Naive thymus-derived CD4-positive, alpha-beta T cell (primary cell): ENCODE measurements at regions of chr17 and their contacts with region 1.

Region 1: GRCh38 chr17:49343273-49343672 is 18.8 kb downstream of the ZNF652 start:
- DNase-seq: peak in 4 of 9 donors; percentile 12 to 35 (median 26)
- ATAC-seq: no peak
- H3K4me3 ChIP-seq: peak overlapping the region; percentile 10
- H3K4me3 Mint-ChIP-seq: peak overlapping the region; percentile 35 to 85 (median 79)
- H3K27ac ChIP-seq: no peak overlapping the region
- H3K27ac Mint-ChIP-seq: peak overlapping the region; percentile 6 to 90 (median 72)
- H3K4me1 ChIP-seq: peaks cover 13 to 51% of the 10 kb centered on the region in 2 donors
- H3K4me1 Mint-ChIP-seq: peaks cover 39 to 82% (median 68%) of the 10 kb centered on the region in 7 donors
- H3K27me3 ChIP-seq: no peaks in the 10 kb centered on the region
- H3K27me3 Mint-ChIP-seq: peaks cover 0 to 9% (median 0%) of the 10 kb centered on the region in 5 donors

Region 2: DNA sequence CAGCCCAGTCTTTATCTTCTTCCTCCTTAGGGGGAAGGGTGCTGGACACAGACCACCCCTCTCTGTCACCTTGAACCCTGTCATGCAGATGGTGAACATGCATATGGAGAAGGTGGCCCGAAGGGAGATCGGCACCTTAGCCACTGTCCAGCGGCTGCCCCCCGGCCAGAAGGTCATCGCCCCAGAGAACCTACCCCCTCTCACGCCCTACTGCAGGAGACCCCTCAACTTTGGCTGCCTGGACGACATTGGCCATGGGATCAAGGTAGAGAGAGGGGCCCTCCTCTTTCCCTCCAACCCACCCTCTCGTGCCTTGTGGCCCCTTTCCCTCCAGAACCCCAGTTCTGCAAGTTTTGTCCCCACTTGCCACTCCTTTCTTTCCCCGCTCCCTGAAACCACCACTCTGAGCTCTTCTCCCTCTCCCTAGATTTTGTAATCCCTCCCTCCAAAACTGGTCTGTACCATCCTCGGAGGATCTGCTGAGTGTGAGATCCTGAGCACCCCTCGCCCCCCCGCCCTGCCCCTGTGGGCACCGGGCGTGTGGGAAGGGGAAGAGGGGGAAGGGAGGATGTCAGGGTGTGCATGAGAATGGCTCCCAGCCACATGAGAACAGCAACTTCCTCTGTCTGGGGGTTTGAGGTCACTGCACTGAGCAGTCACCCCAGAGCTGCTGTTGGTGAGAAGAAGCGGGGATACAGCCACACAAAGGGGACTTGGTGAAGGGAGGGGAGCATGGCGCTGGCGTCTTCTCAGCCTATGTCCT is 125.4 kb before region 1 on chr17:
- CTCF ChIA-PET with region 1: no interaction called
- POLR2A ChIA-PET with region 1: no interaction called
- intact Hi-C with region 1: loop called in 1 of 2 experiments (anchors 1 kb)
- DNase-seq: peak; percentile 41 to 84 (median 79)
- ATAC-seq: peak; percentile 87
- H3K4me3 ChIP-seq: no peak overlapping the region
- H3K4me3 Mint-ChIP-seq: peak overlapping the region; percentile 78 to 94 (median 84)
- H3K27ac ChIP-seq: peak overlapping the region; percentile 70
- H3K27ac Mint-ChIP-seq: peak overlapping the region; percentile 81 to 99 (median 92)
- H3K4me1 ChIP-seq: peaks cover 64 to 72% of the 10 kb centered on the region in 2 donors
- H3K4me1 Mint-ChIP-seq: peaks cover 56 to 74% (median 65%) of the 10 kb centered on the region in 7 donors
- H3K27me3 ChIP-seq: no peaks in the 10 kb centered on the region
- H3K27me3 Mint-ChIP-seq: no peaks in the 10 kb centered on the region

Region 3: DNA sequence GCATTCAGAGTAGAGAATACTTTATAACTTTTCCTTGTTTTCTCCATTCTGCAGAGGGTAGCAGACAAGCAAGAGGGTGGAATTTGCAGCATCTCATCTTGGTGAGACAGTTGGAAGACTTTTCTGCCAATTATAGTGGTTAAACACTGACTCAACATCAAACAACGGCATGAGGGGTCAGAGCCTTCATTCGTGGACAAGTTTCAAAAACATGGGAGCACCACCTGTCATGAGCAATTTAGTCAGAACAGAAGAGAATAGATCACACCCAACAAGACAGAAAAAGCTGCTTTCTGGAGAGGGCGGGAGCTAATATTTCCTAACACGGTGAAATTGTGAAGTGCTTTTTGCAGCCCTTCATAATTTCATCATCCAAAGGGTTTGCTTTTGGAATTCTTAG is 36.7 kb after region 1 on chr17:
- CTCF ChIA-PET with region 1: no interaction called
- POLR2A ChIA-PET with region 1: no interaction called
- intact Hi-C with region 1: no loop called
- DNase-seq: no peak
- ATAC-seq: no peak
- H3K4me3 ChIP-seq: no peak overlapping the region
- H3K4me3 Mint-ChIP-seq: no peak overlapping the region
- H3K27ac ChIP-seq: no peak overlapping the region
- H3K27ac Mint-ChIP-seq: no peak overlapping the region
- H3K4me1 ChIP-seq: no peaks in the 10 kb centered on the region
- H3K4me1 Mint-ChIP-seq: peaks cover 0 to 4% (median 1%) of the 10 kb centered on the region in 7 donors
- H3K27me3 ChIP-seq: no peaks in the 10 kb centered on the region
- H3K27me3 Mint-ChIP-seq: peaks cover 0 to 12% (median 0%) of the 10 kb centered on the region in 5 donors

Region 4: GRCh38 chr17:49390548-49391324 is 47.5 kb after region 1 on chr17:
- CTCF ChIA-PET with region 1: interaction called, 5 read pairs
- POLR2A ChIA-PET with region 1: no interaction called
- intact Hi-C with region 1: loop called in 1 of 2 experiments (anchors 2 kb)
- DNase-seq: no peak
- ATAC-seq: peak; percentile 48
- H3K4me3 ChIP-seq: peak overlapping the region; percentile 29
- H3K4me3 Mint-ChIP-seq: peak overlapping the region; percentile 21 to 83 (median 58)
- H3K27ac ChIP-seq: no peak overlapping the region
- H3K27ac Mint-ChIP-seq: peak overlapping the region; percentile 44 to 93 (median 71)
- H3K4me1 ChIP-seq: peaks cover 43 to 51% of the 10 kb centered on the region in 2 donors
- H3K4me1 Mint-ChIP-seq: peaks cover 48 to 70% (median 63%) of the 10 kb centered on the region in 7 donors
- H3K27me3 ChIP-seq: no peaks in the 10 kb centered on the region
- H3K27me3 Mint-ChIP-seq: no peaks in the 10 kb centered on the region